A549 (cell line): ENCODE measurements at regions of chr22 and their contacts with region 1.

Region 1: GRCh38 chr22:29040385-29041275 is 21.0 kb downstream of the C22orf31 start:
- DNase-seq: peak in 1 of 2 experiments; percentile 77
- ATAC-seq: peak; percentile 90 to 92
- H3K4me3 ChIP-seq: no peak overlapping the region
- H3K27ac ChIP-seq: peak overlapping the region; percentile 70 to 87
- H3K4me1 ChIP-seq: peaks cover 63% of the 10 kb centered on the region
- CTCF ChIP-seq: peak; percentile 90
- EP300 ChIP-seq: no peak
- POLR2A ChIP-seq: no peak
- RAD21 ChIP-seq: peak; percentile 91 to 95

Region 2: GRCh38 chr22:28600546-28601143 is 440.0 kb before region 1 on chr22:
- CTCF ChIA-PET with region 1: interaction called, 16 read pairs
- POLR2A ChIA-PET with region 1: no interaction called
- DNase-seq: peak; percentile 11 to 48
- ATAC-seq: peak in 1 of 2 experiments; percentile 50; a peak in 3 of 6 replicates
- H3K4me3 ChIP-seq: no peak overlapping the region
- H3K27ac ChIP-seq: no peak overlapping the region
- H3K4me1 ChIP-seq: peaks cover 18% of the 10 kb centered on the region
- CTCF ChIP-seq: peak; percentile 61
- EP300 ChIP-seq: no peak
- POLR2A ChIP-seq: no peak
- RAD21 ChIP-seq: peak; percentile 75 to 82

Region 3: DNA sequence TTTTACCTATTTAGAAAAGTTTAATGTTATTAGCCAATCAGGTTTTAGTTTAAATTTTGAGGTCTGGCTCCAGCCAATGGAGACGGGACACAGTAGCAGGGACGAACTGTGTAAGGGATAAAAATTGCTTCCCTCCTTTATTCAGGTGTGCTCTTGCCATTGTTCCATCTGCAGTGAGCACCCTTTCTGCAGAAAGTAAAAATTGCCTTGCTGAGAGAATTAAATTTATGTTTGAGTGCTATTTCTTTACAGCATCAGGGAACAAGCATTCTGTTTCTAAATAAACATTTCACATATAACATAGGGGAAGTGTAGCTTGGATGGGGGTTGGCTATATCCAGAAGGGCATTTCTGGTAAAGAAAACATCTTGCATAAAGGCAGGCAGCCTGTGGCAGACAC is 193.6 kb before region 1 on chr22:
- CTCF ChIA-PET with region 1: interaction called, 27 read pairs
- POLR2A ChIA-PET with region 1: no interaction called
- DNase-seq: no peak
- ATAC-seq: no peak
- H3K4me3 ChIP-seq: no peak overlapping the region
- H3K27ac ChIP-seq: no peak overlapping the region
- H3K4me1 ChIP-seq: no peaks in the 10 kb centered on the region
- CTCF ChIP-seq: no peak
- EP300 ChIP-seq: no peak
- POLR2A ChIP-seq: no peak
- RAD21 ChIP-seq: no peak

Region 4: DNA sequence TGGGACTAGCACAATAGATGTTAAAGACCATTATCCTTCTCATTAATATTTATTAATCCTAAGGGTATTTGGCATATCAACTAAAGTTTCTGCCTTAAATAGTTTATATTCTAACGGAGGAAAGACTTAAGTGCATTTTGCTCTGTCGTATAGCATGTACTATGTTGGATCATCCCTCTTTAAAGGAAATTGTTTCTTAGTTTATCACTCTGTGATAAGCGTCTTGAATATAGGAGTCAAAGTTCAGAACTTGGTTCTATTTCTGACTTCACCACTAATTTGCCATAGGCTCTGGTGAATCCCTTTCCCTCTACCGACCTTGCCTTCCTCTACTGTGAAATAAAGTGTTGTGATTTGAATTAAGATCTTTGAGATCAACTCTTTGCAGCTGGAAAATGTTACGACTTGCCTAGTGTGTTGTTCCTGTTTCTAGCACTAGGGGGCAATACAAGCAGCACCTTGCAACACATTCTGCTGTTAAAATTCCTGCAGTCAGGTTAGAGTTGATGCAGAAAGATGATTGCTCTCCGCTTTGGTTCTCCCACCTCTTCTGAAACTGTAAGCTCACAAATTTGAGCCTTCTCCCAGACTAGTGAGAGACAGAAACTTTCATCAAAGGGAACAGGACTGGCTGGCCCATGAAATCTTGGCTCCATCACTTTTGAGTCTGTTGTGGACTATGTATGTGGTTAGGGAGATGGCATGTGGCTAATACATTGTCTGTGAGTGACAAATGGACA is 185.1 kb before region 1 on chr22:
- CTCF ChIA-PET with region 1: interaction called, 73 read pairs
- POLR2A ChIA-PET with region 1: no interaction called
- DNase-seq: peak; percentile 69 to 71
- ATAC-seq: peak; percentile 75 to 82
- H3K4me3 ChIP-seq: no peak overlapping the region
- H3K27ac ChIP-seq: peak overlapping the region; percentile 64 to 67
- H3K4me1 ChIP-seq: peaks cover 9% of the 10 kb centered on the region; the same call in 2 of the 3 replicates
- CTCF ChIP-seq: peak; percentile 78
- EP300 ChIP-seq: no peak
- POLR2A ChIP-seq: no peak
- RAD21 ChIP-seq: peak; percentile 85 to 89

Region 5: DNA sequence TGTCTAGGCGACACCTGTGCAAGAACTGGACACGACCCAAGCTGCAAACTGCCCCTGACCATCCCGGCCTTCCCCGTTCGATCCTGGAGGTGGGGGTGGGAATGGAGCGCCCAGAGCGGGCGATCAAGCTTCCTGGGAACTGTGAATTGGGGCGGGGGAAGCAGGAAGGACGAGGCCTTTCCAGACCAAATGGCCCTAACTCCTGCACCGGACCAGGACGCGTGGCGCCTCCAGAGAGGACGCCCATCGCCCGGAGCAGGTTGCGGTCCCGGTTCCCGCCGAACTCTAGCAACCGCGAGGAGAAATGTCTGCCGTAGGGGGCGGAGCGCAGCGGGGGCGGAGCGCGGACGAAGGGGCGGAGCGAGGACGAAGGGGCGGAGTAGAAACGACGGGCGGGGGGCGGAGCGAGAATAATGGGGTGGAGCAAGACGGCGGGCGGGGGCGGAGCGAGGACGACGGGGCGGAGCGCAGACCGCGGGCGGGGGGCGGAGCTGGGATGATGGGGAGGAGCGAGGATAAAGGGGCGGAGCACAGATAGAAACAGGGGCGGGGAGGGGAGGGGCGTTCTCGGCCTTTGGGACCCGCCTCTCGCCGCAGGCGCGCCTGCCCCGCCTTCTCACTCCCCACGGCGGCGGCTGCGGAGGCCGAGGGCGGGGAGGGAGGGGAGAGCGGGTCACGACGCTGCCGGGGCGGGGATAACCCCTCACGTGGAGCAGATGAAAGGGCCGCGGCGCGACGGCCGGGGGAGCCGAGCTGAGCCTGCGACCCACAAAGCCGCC is 157.6 kb before region 1 on chr22 and contains the start of gene ZNRF3:
- CTCF ChIA-PET with region 1: interaction called, 24 read pairs
- POLR2A ChIA-PET with region 1: interaction called, 6 read pairs
- DNase-seq: peak; percentile 65 to 90
- ATAC-seq: peak; percentile 80 to 90
- H3K4me3 ChIP-seq: peak within 1 kb of the TSS; percentile 98
- H3K27ac ChIP-seq: peak within 1 kb of the TSS; percentile 91 to 97
- H3K4me1 ChIP-seq: peaks cover 43% of the 10 kb centered on the region
- CTCF ChIP-seq: no peak
- EP300 ChIP-seq: no peak
- POLR2A ChIP-seq: peak; percentile 59
- RAD21 ChIP-seq: no peak
- polyA plus RNA-seq, gene ZNRF3: 4.6 and 5.5 TPM in 2 replicates

Region 6: DNA sequence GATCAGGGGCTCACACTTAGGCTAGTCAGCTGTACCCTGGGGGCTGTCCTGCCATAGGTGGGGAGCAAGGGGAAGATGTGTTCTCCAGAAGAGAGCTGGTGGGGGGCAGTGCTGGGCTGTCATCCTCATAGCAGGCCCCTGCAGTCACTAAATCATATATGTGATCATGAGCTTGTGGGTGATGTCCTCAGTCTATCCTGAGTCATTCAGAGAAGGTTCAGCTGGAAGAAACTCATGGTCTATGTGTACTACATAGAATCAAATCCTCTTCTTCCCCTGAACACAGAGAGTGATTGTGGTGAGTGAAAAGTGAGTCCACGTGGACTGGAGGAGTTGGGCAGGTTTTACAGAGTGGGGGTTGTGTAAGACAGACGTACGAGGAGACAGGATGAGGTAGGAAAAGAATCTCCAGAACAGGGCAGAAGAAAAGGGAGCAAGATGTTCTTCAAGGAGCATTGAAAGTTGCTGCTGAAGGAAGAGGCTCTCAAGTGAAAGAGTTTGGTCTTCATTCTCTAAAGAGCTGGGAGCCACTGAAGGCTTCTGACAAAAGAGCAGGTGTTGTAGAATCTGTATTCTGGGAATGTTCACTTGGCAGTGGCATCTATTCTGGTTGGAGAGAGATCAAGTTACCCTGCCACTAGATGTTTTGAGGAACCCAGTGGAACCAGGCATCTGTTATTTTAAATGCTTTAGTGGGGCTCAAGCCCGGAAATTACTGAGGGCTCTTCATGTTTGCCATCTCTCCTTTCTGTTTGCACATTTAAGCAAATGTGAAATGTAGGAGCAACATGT is 47.9 kb before region 1 on chr22:
- CTCF ChIA-PET with region 1: no interaction called
- POLR2A ChIA-PET with region 1: no interaction called
- DNase-seq: no peak
- ATAC-seq: no peak
- H3K4me3 ChIP-seq: no peak overlapping the region
- H3K27ac ChIP-seq: no peak overlapping the region
- H3K4me1 ChIP-seq: no peaks in the 10 kb centered on the region
- CTCF ChIP-seq: no peak
- EP300 ChIP-seq: no peak
- POLR2A ChIP-seq: no peak
- RAD21 ChIP-seq: no peak

Region 7: GRCh38 chr22:29011240-29012100 is 29.2 kb before region 1 on chr22:
- CTCF ChIA-PET with region 1: interaction called, 18 read pairs
- POLR2A ChIA-PET with region 1: no interaction called
- DNase-seq: no peak
- ATAC-seq: no peak
- H3K4me3 ChIP-seq: no peak overlapping the region
- H3K27ac ChIP-seq: no peak overlapping the region
- H3K4me1 ChIP-seq: peaks cover 9% of the 10 kb centered on the region
- CTCF ChIP-seq: no peak
- EP300 ChIP-seq: no peak
- POLR2A ChIP-seq: no peak
- RAD21 ChIP-seq: no peak